ENCODE measurements at regions of chr12 and their contacts with region 1.

Region 1: GRCh38 chr12:47828608-47829536 is 9.2 kb upstream of the HDAC7 start:
- DNase-seq: peak; percentile 87 to 92 (median 90)
- ATAC-seq: peak; percentile 81
- H3K4me3 ChIP-seq: peak overlapping the region; percentile 11
- H3K27ac ChIP-seq: peak overlapping the region; percentile 65
- H3K4me1 ChIP-seq: peaks cover 44 to 46% of the 10 kb centered on the region in 2 experiments
- H3K27me3 ChIP-seq: no peaks in the 10 kb centered on the region
- CTCF ChIP-seq: no peak
- EP300 ChIP-seq: peak; percentile 62
- POLR2A ChIP-seq: peak; percentile 68
- RAD21 ChIP-seq: no peak

Region 2: GRCh38 chr12:47812797-47813510 is 15.9 kb before region 1 on chr12:
- CTCF ChIA-PET with region 1: no interaction called
- POLR2A ChIA-PET with region 1: interaction called, 18 read pairs
- in situ Hi-C with region 1: no loop called
- intact Hi-C with region 1: no loop called
- DNase-seq: peak; percentile 86 to 92 (median 88)
- ATAC-seq: peak; percentile 84
- H3K4me3 ChIP-seq: peak overlapping the region; percentile 45
- H3K27ac ChIP-seq: peak overlapping the region; percentile 91
- H3K4me1 ChIP-seq: peaks cover 65 to 77% of the 10 kb centered on the region in 2 experiments
- H3K27me3 ChIP-seq: no peaks in the 10 kb centered on the region
- CTCF ChIP-seq: peak in 1 of 3 experiments; percentile 19; a peak in 2 of 6 replicates
- EP300 ChIP-seq: peak; percentile 65; the same call in 1 of the 2 replicates
- POLR2A ChIP-seq: peak; percentile 10; the same call in 1 of the 2 replicates
- RAD21 ChIP-seq: peak in 1 of 2 experiments; percentile 3; a peak in 1 of 4 replicates

Region 3: DNA sequence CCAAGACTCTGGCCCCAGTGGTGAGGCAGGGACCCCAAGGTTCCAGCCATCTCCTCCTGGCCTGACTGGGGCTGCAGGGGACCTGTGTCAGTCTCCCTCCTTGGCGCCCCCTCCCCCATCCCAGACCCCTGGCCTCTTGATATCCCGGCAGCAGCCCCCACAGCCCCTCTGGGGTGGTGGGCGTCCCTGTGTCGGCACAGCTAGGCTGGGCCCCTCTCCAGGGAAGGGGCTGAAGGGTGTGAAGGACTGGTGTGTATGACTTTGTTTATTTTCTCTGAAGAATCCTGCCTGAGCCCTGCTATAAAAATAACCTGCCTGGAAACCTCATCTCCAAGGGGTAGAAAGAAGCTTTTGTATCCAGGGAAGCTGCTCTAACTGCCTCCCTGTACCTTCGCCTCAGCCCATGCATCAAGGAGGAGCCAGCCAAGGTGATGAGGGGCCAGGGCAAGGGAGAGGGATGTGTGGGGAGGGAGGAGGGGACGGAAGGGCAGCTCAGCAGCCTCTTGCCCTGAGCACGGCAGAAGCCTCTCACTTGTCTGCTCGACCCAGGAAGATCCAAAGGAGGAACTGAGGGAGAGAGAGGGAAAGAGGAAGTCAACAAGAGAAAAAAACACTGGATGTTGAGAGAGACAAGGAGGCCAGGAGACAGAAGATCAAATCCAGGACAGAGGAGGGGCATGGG is 200.8 kb after region 1 on chr12:
- CTCF ChIA-PET with region 1: no interaction called
- POLR2A ChIA-PET with region 1: no interaction called
- in situ Hi-C with region 1: no loop called
- intact Hi-C with region 1: no loop called
- DNase-seq: no peak
- ATAC-seq: peak; percentile 8; the same call in 2 of the 3 replicates
- H3K4me3 ChIP-seq: no peak overlapping the region
- H3K27ac ChIP-seq: no peak overlapping the region
- H3K4me1 ChIP-seq: peaks cover 8 to 17% of the 10 kb centered on the region in 2 experiments
- H3K27me3 ChIP-seq: no peaks in the 10 kb centered on the region; a peak in 1 of 5 replicates
- CTCF ChIP-seq: no peak
- EP300 ChIP-seq: no peak
- POLR2A ChIP-seq: no peak
- RAD21 ChIP-seq: no peak

Region 4: GRCh38 chr12:48286665-48287064 is 457.8 kb after region 1 on chr12:
- CTCF ChIA-PET with region 1: no interaction called
- POLR2A ChIA-PET with region 1: no interaction called
- in situ Hi-C with region 1: no loop called
- intact Hi-C with region 1: no loop called
- DNase-seq: peak in 2 of 4 experiments; percentile 12 to 41
- ATAC-seq: peak; percentile 90
- H3K4me3 ChIP-seq: no peak overlapping the region
- H3K27ac ChIP-seq: no peak overlapping the region
- H3K4me1 ChIP-seq: peaks cover 0 to 2% of the 10 kb centered on the region in 2 experiments; a peak in 1 of 5 replicates
- H3K27me3 ChIP-seq: no peaks in the 10 kb centered on the region
- CTCF ChIP-seq: peak; percentile 56 to 68 (median 67)
- EP300 ChIP-seq: no peak
- POLR2A ChIP-seq: no peak
- RAD21 ChIP-seq: peak; percentile 43 to 77; a peak in 3 of 4 replicates

Measured in K562 (cell line).